Dendritic cell treated with granulocyte-macrophage colony-stimulating factor and Interleukin-4, amounts not matched to agents 40 ng/mL and 50 ng/mL, for 4 days (primary cell): ENCODE measurements at regions of chr5 and their contacts with region 1.

Region 1: GRCh38 chr5:159331093-159331973 is 1.0 kb upstream of the IL12B start:
- H3K4me3 Mint-ChIP-seq: peak overlapping the region; percentile 68
- H3K27ac Mint-ChIP-seq: peak overlapping the region; percentile 68
- H3K4me1 Mint-ChIP-seq: peaks cover 30% of the 10 kb centered on the region
- H3K27me3 Mint-ChIP-seq: peaks cover 2% of the 10 kb centered on the region

Region 2: GRCh38 chr5:159156426-159157238 is 174.7 kb before region 1 on chr5:
- intact Hi-C with region 1: no loop called
- H3K4me3 Mint-ChIP-seq: no peak overlapping the region
- H3K27ac Mint-ChIP-seq: no peak overlapping the region
- H3K4me1 Mint-ChIP-seq: no peaks in the 10 kb centered on the region
- H3K27me3 Mint-ChIP-seq: no peaks in the 10 kb centered on the region

Region 3: DNA sequence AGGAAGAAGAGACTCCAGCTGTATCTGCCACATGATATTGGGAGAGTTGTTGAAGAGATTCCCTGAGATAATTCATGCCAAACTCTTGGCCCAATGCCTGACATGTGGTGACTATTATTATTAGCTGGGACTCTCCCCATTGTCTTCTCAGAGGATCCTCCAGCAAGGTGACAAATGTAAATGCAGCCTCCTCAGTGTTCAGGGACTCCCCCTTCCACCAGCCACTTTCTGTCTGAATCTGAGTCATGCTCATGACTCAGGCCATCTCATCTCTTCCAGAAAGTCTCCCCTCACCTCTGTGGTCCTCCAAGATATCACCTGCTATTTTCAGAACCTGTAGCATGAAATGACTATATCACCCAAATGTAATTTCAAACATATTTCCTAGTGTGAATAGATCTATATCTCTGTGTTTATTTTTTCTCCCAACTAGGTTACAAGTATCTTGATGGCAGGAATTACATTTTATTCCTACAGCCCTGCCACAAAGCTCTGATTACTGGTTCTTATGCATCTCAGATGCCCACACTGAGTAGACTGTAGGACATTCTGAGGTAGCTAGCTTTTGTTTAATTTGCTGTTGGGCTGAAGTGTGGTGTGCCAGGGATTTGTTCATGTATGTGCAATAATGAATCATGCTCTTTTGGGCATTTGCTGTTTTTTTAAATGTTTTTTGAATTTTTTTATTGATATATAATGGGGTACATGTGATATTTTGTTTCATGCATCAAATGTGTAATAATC is 125.6 kb after region 1 on chr5:
- intact Hi-C with region 1: loop called (anchors 10 kb)
- H3K4me3 Mint-ChIP-seq: no peak overlapping the region
- H3K27ac Mint-ChIP-seq: no peak overlapping the region
- H3K4me1 Mint-ChIP-seq: peaks cover 38% of the 10 kb centered on the region
- H3K27me3 Mint-ChIP-seq: peaks cover 27% of the 10 kb centered on the region

Region 4: DNA sequence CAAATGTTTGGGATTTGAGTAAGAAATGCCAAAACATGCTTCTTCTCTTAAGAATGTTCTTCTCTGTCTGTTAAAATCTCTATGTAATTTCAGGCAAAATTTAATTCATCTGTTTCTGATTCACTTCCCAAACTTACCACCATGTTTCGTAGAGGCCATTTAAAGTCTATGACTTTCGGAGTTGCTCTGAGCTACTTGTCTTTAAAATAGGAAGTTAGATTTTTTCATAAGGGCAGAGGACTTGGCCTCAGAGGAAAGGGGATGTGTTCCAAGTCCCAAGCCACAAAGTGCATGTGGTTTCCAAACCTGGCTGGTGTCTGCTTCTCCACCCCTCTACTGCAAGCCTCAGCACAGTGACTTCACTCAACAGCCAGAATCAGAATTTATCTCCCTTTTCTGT is 473.7 kb after region 1 on chr5:
- intact Hi-C with region 1: loop called (anchors 10 kb)
- H3K4me3 Mint-ChIP-seq: no peak overlapping the region
- H3K27ac Mint-ChIP-seq: peak overlapping the region; percentile 76
- H3K4me1 Mint-ChIP-seq: peaks cover 44% of the 10 kb centered on the region
- H3K27me3 Mint-ChIP-seq: peaks cover 6% of the 10 kb centered on the region